Naive thymus-derived CD4-positive, alpha-beta T cell (primary cell): ENCODE measurements at regions of chr10 and their contacts with region 1.

Region 1: GRCh38 chr10:84139126-84140035 is at the start of gene GHITM:
- DNase-seq: peak; percentile 98 to 100 (median 100)
- ATAC-seq: peak; percentile 97
- H3K4me3 ChIP-seq: peak within 1 kb of the TSS; percentile 92
- H3K4me3 Mint-ChIP-seq: peak within 1 kb of the TSS; percentile 88 to 98 (median 94)
- H3K27ac ChIP-seq: peak within 1 kb of the TSS; percentile 98
- H3K27ac Mint-ChIP-seq: peak within 1 kb of the TSS; percentile 93 to 99 (median 98)
- H3K4me1 ChIP-seq: peaks cover 15 to 18% of the 10 kb centered on the region in 2 donors
- H3K4me1 Mint-ChIP-seq: peaks cover 20 to 45% (median 36%) of the 10 kb centered on the region in 7 donors
- H3K27me3 ChIP-seq: no peaks in the 10 kb centered on the region
- H3K27me3 Mint-ChIP-seq: peaks cover 0 to 10% (median 0%) of the 10 kb centered on the region in 5 donors
- total RNA-seq, gene GHITM: 61.5 to 115 (median 76.3) TPM

Region 2: GRCh38 chr10:84156768-84157167 is 17.4 kb after region 1 on chr10:
- CTCF ChIA-PET with region 1: no interaction called
- POLR2A ChIA-PET with region 1: no interaction called
- intact Hi-C with region 1: loop called in 1 of 2 experiments (anchors 1 kb)
- DNase-seq: peak in 2 of 9 donors; percentile 23 to 30
- ATAC-seq: peak; percentile 97
- H3K4me3 ChIP-seq: no peak overlapping the region
- H3K4me3 Mint-ChIP-seq: no peak overlapping the region
- H3K27ac ChIP-seq: no peak overlapping the region
- H3K27ac Mint-ChIP-seq: peak overlapping the region; percentile 30 to 85 (median 65)
- H3K4me1 ChIP-seq: no peaks in the 10 kb centered on the region
- H3K4me1 Mint-ChIP-seq: peaks cover 4 to 19% (median 13%) of the 10 kb centered on the region in 7 donors
- H3K27me3 ChIP-seq: no peaks in the 10 kb centered on the region
- H3K27me3 Mint-ChIP-seq: peaks cover 0 to 6% (median 0%) of the 10 kb centered on the region in 5 donors

Region 3: DNA sequence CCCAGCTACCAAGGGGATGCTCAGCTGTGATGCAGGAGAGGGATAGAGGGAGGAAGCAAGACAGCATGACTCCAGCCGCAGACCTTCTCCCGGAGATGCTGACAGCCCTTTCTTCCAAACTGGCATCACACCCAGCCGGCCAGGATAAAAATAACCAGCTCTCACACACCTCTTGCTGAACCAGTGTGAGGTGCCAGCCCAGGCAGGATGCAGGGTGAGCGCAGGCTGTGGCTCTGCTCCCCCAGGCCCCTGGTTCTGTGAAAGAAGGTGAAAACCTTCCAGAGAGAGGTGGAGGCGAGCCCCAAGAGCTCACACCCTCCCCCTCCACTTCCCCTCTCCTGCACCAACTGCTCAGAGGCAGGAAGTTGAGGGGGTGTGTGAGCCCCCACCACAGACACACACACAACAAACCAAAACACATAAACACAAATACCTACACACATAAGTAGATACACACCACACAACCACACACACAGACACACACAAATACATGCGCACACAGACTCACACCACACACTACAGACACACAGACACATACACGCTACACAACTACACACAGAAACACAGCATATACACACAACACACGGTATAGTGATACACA is 38.3 kb after region 1 on chr10:
- CTCF ChIA-PET with region 1: interaction called, 3 read pairs
- POLR2A ChIA-PET with region 1: interaction called, 12 read pairs
- intact Hi-C with region 1: loop called in 1 of 2 experiments (anchors 1 kb)
- DNase-seq: peak in 7 of 9 donors; percentile 43 to 77 (median 67)
- ATAC-seq: peak; percentile 90
- H3K4me3 ChIP-seq: peak overlapping the region; percentile 30
- H3K4me3 Mint-ChIP-seq: no peak overlapping the region
- H3K27ac ChIP-seq: peak overlapping the region; percentile 43
- H3K27ac Mint-ChIP-seq: no peak overlapping the region
- H3K4me1 ChIP-seq: peaks cover 27 to 36% of the 10 kb centered on the region in 2 donors
- H3K4me1 Mint-ChIP-seq: peaks cover 0 to 12% (median 8%) of the 10 kb centered on the region in 7 donors
- H3K27me3 ChIP-seq: no peaks in the 10 kb centered on the region
- H3K27me3 Mint-ChIP-seq: no peaks in the 10 kb centered on the region

Region 4: DNA sequence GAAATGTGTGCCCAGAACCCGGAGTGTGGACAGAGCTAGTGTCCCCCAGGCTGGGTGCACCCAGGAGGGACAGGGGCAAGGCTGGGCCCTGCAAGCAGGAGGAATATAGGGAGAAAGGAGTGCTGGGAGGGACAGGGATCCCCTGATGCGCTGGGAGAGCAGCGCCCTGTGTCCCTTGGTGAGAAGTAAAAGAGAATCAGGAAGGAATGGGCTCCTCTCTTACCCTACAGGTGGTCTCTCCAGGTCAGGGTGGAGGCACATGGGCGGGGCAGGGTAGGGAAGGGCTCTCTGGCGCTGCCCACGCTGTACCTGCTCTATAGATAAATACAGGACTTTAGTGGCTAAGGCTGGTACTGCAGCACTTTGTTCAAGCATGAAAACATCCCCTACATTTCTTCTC is 1473.5 kb after region 1 on chr10:
- CTCF ChIA-PET with region 1: no interaction called
- POLR2A ChIA-PET with region 1: no interaction called
- intact Hi-C with region 1: loop called in 1 of 2 experiments (anchors 5 kb)
- DNase-seq: peak in 4 of 9 donors; percentile 19 to 35 (median 24)
- ATAC-seq: peak; percentile 56
- H3K4me3 ChIP-seq: peak overlapping the region; percentile 44
- H3K4me3 Mint-ChIP-seq: peak overlapping the region; percentile 69 to 88 (median 78)
- H3K27ac ChIP-seq: no peak overlapping the region
- H3K27ac Mint-ChIP-seq: peak overlapping the region; percentile 54 to 94 (median 83)
- H3K4me1 ChIP-seq: peaks cover 36 to 44% of the 10 kb centered on the region in 2 donors
- H3K4me1 Mint-ChIP-seq: peaks cover 30 to 81% (median 71%) of the 10 kb centered on the region in 7 donors
- H3K27me3 ChIP-seq: no peaks in the 10 kb centered on the region
- H3K27me3 Mint-ChIP-seq: peaks cover 0 to 34% (median 0%) of the 10 kb centered on the region in 5 donors